IMR-90 (cell line): ENCODE measurements at regions of chr12 and their contacts with region 1.

Region 1: GRCh38 chr12:94289461-94290312 is 141.3 kb downstream of the PLXNC1 start:
- DNase-seq: peak; percentile 75
- ATAC-seq: peak; percentile 88
- H3K4me3 ChIP-seq: no peak overlapping the region
- H3K27ac ChIP-seq: peak overlapping the region; percentile 72; the same call in 1 of the 2 replicates
- H3K4me1 ChIP-seq: peaks cover 13% of the 10 kb centered on the region
- H3K27me3 ChIP-seq: no peaks in the 10 kb centered on the region
- CTCF ChIP-seq: no peak
- POLR2A ChIP-seq: no peak
- RAD21 ChIP-seq: no peak

Region 2: DNA sequence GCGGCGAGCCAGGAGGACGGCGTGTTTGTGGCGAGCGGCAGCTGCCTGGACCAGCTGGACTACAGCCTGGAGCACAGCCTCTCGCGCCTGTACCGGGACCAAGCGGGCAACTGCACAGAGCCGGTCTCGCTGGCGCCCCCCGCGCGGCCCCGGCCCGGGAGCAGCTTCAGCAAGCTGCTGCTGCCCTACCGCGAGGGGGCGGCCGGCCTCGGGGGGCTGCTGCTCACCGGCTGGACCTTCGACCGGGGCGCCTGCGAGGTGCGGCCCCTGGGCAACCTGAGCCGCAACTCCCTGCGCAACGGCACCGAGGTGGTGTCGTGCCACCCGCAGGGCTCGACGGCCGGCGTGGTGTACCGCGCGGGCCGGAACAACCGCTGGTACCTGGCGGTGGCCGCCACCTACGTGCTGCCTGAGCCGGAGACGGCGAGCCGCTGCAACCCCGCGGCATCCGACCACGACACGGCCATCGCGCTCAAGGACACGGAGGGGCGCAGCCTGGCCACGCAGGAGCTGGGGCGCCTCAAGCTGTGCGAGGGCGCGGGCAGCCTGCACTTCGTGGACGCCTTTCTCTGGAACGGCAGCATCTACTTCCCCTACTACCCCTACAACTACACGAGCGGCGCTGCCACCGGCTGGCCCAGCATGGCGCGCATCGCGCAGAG is 140.4 kb before region 1 on chr12:
- CTCF ChIA-PET with region 1: no interaction called
- POLR2A ChIA-PET with region 1: no interaction called
- dilution Hi-C with region 1: no loop called
- in situ Hi-C with region 1: no loop called
- intact Hi-C with region 1: loop called (anchors 5 kb)
- DNase-seq: peak; percentile 23
- ATAC-seq: peak; percentile 64
- H3K4me3 ChIP-seq: peak overlapping the region; percentile 67
- H3K27ac ChIP-seq: no peak overlapping the region
- H3K4me1 ChIP-seq: no peaks in the 10 kb centered on the region; the same call in none of the 2 replicates
- H3K27me3 ChIP-seq: peaks cover 88% of the 10 kb centered on the region
- CTCF ChIP-seq: 0 out of 2 replicates have a peak, but pooled peaks have one; percentile 18
- POLR2A ChIP-seq: no peak
- RAD21 ChIP-seq: no peak

Region 3: GRCh38 chr12:94305130-94305957 is 15.7 kb after region 1 on chr12:
- CTCF ChIA-PET with region 1: interaction called, 11 read pairs
- POLR2A ChIA-PET with region 1: no interaction called
- dilution Hi-C with region 1: no loop called
- in situ Hi-C with region 1: no loop called
- intact Hi-C with region 1: no loop called
- DNase-seq: peak; percentile 82
- ATAC-seq: peak; percentile 78
- H3K4me3 ChIP-seq: no peak overlapping the region
- H3K27ac ChIP-seq: peak overlapping the region; percentile 19; the same call in 1 of the 2 replicates
- H3K4me1 ChIP-seq: peaks cover 9% of the 10 kb centered on the region
- H3K27me3 ChIP-seq: no peaks in the 10 kb centered on the region
- CTCF ChIP-seq: no peak
- POLR2A ChIP-seq: no peak
- RAD21 ChIP-seq: no peak